Calu3 (cell line): ENCODE measurements at regions of chrX and their contacts with region 1.

Region 1: DNA sequence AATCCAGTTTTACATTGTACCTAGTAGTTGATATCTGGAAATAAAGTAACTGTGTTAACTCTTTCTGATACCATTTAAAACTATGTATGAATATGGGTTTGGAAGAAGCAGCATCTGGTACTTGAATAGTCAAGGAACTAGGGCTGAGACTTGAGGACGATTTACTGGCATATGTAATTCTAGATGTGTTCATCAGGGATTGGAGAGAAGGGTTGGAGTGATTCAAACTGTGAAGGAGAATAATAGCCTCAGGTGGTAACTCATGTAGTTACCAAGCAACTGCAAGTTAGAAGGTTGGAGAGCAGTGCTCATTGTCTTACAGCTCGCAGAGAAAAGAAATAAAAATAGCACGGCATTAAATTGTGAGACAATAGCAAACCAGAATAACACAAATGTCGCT is 29.5 kb upstream of the TXLNG start:
- DNase-seq: no peak
- H3K4me3 Mint-ChIP-seq: no peak overlapping the region
- H3K27ac Mint-ChIP-seq: no peak overlapping the region
- H3K4me1 Mint-ChIP-seq: no peaks in the 10 kb centered on the region
- H3K27me3 Mint-ChIP-seq: no peaks in the 10 kb centered on the region
- CTCF ChIP-seq: no peak

Region 2: GRCh38 chrX:16739581-16739980 is 17.1 kb before region 1 on chrX:
- CTCF ChIA-PET with region 1: interaction called, 12 read pairs
- intact Hi-C with region 1: no loop called
- DNase-seq: no peak
- H3K4me3 Mint-ChIP-seq: no peak overlapping the region
- H3K27ac Mint-ChIP-seq: no peak overlapping the region
- H3K4me1 Mint-ChIP-seq: no peaks in the 10 kb centered on the region
- H3K27me3 Mint-ChIP-seq: no peaks in the 10 kb centered on the region
- CTCF ChIP-seq: no peak